ENCODE measurements at regions of chr4 and their contacts with region 1.

Region 1: DNA sequence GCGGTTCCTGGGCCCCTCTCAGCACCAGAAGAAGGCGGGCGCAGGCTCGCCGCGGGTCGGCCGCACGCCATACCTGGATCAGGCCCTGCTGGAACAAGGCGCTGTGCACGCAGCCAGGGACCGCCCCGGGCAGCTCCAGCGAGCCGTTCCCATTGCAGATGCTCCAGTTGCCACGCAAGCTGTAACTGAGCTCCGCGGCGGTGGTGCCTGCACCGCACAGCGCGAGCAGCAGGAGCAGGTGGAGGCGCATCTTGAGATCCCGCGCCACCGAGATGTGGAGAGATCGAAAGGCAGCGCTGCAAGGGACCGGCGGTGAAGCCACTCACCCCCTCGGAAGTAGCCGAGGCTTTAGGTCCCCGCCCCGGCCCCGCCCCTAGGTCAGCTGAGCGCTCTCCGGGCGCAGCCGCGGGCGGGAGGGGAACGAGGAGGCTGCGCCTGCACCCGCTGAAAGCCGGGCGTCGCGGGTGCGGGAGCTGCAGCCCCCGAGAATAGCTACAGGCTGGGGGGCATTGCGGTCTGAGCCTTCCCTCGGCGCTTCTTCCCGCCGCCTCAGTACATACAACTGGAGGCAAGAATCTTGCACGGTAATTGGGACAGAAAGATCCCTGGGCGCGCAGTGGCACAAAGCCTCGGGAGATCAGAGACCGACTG is at the start of gene MANBA:
- DNase-seq: peak; percentile 93
- ATAC-seq: peak; percentile 93
- H3K4me3 Mint-ChIP-seq: peak within 1 kb of the TSS; percentile 90
- H3K27ac Mint-ChIP-seq: peak within 1 kb of the TSS; percentile 89
- H3K4me1 Mint-ChIP-seq: peaks cover 25% of the 10 kb centered on the region
- H3K27me3 Mint-ChIP-seq: peaks cover under 1% of the 10 kb centered on the region
- total RNA-seq, gene MANBA: 12.0 to 13.3 TPM

Region 2: GRCh38 chr4:102620697-102621497 is 139.9 kb before region 1 on chr4:
- CTCF ChIA-PET with region 1: no interaction called
- POLR2A ChIA-PET with region 1: no interaction called
- intact Hi-C with region 1: loop called in 1 of 2 experiments (anchors 5 kb)
- DNase-seq: peak; percentile 30
- ATAC-seq: peak; percentile 25
- H3K4me3 Mint-ChIP-seq: no peak overlapping the region
- H3K27ac Mint-ChIP-seq: peak overlapping the region; percentile 47
- H3K4me1 Mint-ChIP-seq: peaks cover 50% of the 10 kb centered on the region
- H3K27me3 Mint-ChIP-seq: no peaks in the 10 kb centered on the region

Region 3: DNA sequence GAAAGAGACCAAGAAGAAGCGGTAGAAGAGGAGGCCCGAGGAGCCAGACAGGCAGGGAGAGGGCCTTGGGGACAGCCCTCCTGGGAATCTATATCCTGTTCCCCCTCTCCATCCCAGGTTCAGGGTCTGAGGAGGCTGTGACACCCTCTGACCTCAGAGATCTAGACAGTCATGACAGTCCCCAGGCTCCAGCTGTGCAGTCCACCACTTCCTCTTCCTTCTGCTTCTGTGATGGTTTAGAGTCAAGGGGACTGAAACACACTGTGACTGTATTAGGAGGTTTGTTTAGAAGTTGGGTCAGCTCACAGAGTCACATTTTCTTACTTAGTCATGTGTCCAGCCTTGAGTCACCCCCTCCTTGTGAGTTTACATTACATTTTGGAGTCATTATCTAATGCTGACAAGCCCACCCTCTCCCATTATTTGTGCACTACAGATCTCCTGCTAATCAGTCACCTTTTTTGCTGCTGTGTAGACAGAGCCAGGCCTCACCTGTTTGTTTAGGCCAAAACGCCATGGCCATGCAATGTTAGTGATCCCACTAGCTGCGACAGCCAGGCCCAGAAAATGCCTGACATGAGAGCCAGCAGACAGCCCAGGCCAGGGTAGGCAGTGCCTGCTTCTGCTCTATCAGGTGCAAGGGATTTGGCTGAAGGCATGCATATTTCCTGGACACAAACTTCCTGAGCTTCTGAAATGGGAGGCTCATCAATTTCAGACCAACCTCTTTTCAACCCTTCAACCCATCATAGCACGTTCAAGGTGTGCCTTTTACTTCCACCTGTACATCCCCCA is 26.0 kb before region 1 on chr4:
- CTCF ChIA-PET with region 1: no interaction called
- POLR2A ChIA-PET with region 1: no interaction called
- intact Hi-C with region 1: no loop called
- DNase-seq: peak; percentile 16
- ATAC-seq: peak; percentile 93
- H3K4me3 Mint-ChIP-seq: no peak overlapping the region
- H3K27ac Mint-ChIP-seq: no peak overlapping the region
- H3K4me1 Mint-ChIP-seq: peaks cover 19% of the 10 kb centered on the region
- H3K27me3 Mint-ChIP-seq: no peaks in the 10 kb centered on the region

Region 4: DNA sequence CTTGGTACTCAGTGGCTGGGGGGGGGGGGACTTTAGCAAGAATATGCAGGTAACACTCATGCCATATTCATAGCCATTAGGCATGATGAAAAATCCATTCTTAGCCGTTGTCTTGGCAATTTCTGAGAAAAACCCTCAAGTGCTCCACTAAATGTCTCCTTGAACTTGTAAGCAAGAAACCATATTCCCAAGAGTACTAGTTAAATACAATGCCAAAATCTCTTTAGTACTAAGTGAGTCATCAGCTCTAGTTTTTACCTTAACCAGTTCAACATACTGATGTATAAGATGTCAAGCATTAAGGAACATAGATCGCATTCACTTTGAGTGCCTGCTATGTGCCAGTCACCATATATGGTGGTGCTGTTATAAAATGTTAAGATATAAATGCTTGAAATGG is 39.0 kb after region 1 on chr4:
- CTCF ChIA-PET with region 1: no interaction called
- POLR2A ChIA-PET with region 1: interaction called, 5 read pairs
- intact Hi-C with region 1: loop called in 1 of 2 experiments (anchors 5 kb)
- DNase-seq: no peak
- ATAC-seq: no peak
- H3K4me3 Mint-ChIP-seq: no peak overlapping the region
- H3K27ac Mint-ChIP-seq: no peak overlapping the region
- H3K4me1 Mint-ChIP-seq: peaks cover 15% of the 10 kb centered on the region
- H3K27me3 Mint-ChIP-seq: no peaks in the 10 kb centered on the region

Region 5: DNA sequence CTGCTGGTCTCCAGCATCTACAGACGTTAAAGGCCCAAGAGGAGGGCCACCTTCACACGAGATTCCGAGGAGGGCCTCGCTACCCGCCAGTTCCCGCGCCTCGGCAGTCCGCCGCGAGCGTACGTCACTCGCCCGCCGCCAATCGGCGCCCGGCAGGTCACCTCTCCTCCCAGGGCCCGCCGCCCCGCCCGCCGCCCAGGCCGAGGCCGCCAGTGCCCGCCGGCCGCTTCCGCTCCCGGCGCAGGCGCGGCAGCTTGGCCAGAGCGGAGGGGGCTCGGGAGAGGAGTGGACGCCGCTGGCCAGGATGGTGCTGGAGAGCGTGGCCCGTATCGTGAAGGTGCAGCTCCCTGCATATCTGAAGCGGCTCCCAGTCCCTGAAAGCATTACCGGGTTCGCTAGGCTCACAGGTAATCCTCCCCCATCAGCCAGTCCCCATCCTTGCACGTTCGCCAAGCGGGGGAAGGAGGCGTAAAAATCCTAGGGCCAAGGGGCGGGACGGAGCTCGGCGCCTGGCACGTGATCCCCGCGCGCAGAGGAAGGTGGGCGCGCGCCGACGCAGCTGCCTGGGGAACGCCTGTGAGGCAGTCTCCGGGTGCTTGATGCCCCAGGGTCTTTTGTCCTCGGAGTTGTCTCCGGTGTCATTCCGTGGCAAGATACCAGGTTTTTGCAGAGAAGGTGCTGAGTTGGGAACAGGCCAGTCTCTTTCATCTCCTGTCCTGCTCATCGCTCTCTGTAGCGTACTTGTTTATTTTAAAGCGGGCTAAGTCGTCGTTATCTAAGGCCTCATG is 108.2 kb after region 1 on chr4 and contains the start of gene CISD2:
- CTCF ChIA-PET with region 1: no interaction called
- POLR2A ChIA-PET with region 1: interaction called, 4 read pairs
- intact Hi-C with region 1: loop called (anchors 1 to 2 kb)
- DNase-seq: peak; percentile 96
- ATAC-seq: peak; percentile 88
- H3K4me3 Mint-ChIP-seq: peak within 1 kb of the TSS; percentile 95
- H3K27ac Mint-ChIP-seq: peak within 1 kb of the TSS; percentile 99
- H3K4me1 Mint-ChIP-seq: peaks cover 53% of the 10 kb centered on the region
- H3K27me3 Mint-ChIP-seq: no peaks in the 10 kb centered on the region
- total RNA-seq, gene CISD2: 33.5 to 35.1 TPM

Region 6: DNA sequence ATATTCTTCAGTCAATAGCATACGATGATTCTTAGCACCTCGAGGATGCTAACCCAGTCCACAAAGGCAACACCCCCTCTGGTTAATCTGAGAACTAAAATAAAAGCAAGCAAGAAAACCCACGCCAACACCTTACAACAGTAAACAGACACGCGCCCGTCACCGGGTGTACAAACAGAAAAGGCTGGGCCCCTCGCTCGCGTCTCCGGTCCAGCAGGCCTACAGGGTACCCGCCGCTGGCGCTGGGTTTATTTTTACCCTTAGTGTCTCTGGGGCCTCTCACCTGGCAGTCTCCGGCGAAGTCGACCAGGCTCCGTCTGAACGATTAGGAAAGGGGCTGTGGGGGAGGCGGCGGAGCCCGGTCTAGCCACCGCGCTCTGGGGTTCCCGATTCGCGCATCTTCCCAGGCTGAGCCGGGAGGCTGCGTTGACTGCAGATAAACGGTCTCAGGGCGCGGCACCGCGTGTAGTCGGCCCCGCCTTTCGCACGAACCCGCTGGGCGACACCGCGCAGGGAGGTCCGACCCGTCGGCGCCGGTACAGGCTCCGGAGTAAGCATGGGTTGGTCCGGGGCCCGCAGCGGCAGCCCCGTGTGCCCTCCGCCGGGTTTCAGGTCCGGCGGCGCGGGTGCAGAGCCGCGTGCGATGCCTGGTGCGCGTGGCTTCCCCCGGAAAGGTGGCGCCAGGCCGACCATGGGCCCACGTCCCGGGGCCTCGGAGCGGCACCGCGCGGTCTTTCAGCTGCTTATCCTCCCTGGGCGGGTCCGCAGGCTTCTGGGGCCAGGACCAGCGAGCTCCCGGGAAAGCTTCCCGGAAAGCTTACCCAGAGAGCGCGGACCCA is 315.4 kb after region 1 on chr4:
- CTCF ChIA-PET with region 1: no interaction called
- POLR2A ChIA-PET with region 1: no interaction called
- intact Hi-C with region 1: loop called in 1 of 2 experiments (anchors 1 kb)
- DNase-seq: peak; percentile 79
- ATAC-seq: peak; percentile 63
- H3K4me3 Mint-ChIP-seq: peak overlapping the region; percentile 84
- H3K27ac Mint-ChIP-seq: peak overlapping the region; percentile 99
- H3K4me1 Mint-ChIP-seq: peaks cover 45% of the 10 kb centered on the region
- H3K27me3 Mint-ChIP-seq: no peaks in the 10 kb centered on the region

Measured in activated CD4-positive, alpha-beta T cell treated with anti-CD3 and anti-CD28 coated beads for 36 hours (primary cell).